ENCODE measurements at regions of chr15 and their contacts with region 1.

Region 1: DNA sequence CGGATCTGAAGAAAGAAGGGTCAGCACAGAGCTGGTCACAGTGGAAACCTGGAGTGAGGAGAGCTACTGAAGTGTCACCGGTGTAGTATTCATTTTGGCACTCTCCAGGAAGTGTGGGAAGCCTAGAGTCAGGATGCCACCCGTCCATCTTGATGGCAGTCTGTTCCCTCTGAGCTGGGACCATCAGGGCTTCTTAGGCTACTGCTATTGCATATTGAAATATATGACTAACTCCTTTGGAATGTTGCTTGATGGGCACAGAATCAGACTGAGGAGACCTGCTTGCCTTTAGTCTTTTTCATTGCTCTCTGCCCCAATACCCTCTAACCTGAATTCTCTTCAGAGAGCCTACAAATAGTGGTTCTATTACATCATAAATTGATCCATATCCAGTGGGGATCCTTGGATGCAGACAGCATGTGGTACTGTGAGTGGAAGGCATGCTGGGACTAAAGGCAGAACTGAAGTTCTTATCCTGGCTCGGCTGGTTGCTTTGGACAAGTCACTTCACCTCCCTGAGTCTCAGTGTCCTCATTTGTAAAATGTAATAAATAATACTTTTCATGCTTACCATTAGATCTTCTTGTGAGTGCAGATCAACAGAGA is 143.5 kb downstream of the PDE8A start:
- DNase-seq: peak; percentile 57
- ATAC-seq: peak; percentile 81
- H3K4me3 ChIP-seq: no peak overlapping the region
- H3K27ac ChIP-seq: no peak overlapping the region
- H3K4me1 ChIP-seq: peaks cover 6% of the 10 kb centered on the region
- H3K27me3 ChIP-seq: no peaks in the 10 kb centered on the region
- CTCF ChIP-seq: no peak
- POLR2A ChIP-seq: no peak
- RAD21 ChIP-seq: no peak

Region 2: GRCh38 chr15:84961114-84961452 is 164.1 kb before region 1 on chr15:
- CTCF ChIA-PET with region 1: no interaction called
- POLR2A ChIA-PET with region 1: no interaction called
- dilution Hi-C with region 1: no loop called
- in situ Hi-C with region 1: no loop called
- intact Hi-C with region 1: no loop called
- DNase-seq: peak; percentile 91
- ATAC-seq: peak; percentile 92
- H3K4me3 ChIP-seq: no peak overlapping the region
- H3K27ac ChIP-seq: 0 out of 2 replicates have a peak overlapping the region, but pooled peaks have one; percentile 4
- H3K4me1 ChIP-seq: peaks cover 6% of the 10 kb centered on the region
- H3K27me3 ChIP-seq: no peaks in the 10 kb centered on the region
- CTCF ChIP-seq: no peak
- POLR2A ChIP-seq: no peak
- RAD21 ChIP-seq: peak; percentile 22; the same call in 1 of the 2 replicates

Region 3: GRCh38 chr15:85089929-85090597 is 35.1 kb before region 1 on chr15:
- CTCF ChIA-PET with region 1: interaction called, 5 read pairs
- POLR2A ChIA-PET with region 1: no interaction called
- dilution Hi-C with region 1: no loop called
- in situ Hi-C with region 1: no loop called
- intact Hi-C with region 1: loop called (anchors 5 kb)
- DNase-seq: no peak
- ATAC-seq: no peak
- H3K4me3 ChIP-seq: no peak overlapping the region
- H3K27ac ChIP-seq: no peak overlapping the region
- H3K4me1 ChIP-seq: peaks cover 4% of the 10 kb centered on the region
- H3K27me3 ChIP-seq: no peaks in the 10 kb centered on the region
- CTCF ChIP-seq: no peak
- POLR2A ChIP-seq: no peak
- RAD21 ChIP-seq: no peak

Region 4: DNA sequence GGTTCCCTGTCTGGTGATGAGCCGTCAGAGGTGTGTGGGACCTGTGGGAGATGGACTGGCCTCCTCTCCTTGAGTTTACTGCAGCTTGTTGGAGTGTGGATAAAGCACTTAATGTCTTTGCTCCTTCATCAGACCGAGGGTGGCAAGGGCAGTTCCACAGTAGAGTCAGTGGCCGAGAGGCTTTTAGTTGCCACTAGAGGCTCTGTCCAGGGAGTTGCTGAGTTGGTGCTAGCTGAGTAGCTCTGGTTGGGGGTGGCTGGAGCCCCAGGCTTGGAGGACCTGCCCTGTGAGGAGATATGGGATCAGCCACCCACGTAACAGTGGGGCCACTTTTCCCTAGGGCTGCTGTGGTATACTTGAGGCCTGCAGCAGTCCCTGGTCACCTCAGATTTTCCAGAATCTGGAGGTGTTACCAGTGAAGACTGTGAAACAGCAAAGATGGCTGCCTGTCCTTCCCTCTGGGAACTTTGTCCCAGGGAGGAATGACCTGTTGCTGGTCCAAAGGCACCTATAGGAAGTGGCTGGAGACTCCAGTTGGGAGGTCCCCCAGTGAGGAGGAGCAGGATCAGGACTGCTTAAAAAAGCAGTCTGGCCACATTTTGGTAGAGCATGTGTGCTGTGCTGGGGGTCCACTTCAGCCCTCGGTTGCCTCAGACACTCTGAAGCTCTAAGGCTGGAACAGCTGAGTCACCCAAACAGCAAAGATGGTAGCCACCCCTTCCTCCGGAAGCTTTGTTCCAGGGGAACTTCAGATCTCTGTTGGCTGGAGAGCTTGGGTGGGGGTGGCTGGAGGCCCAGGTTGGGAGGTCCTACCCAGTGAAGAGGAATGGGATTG is 328.1 kb after region 1 on chr15:
- CTCF ChIA-PET with region 1: no interaction called
- POLR2A ChIA-PET with region 1: no interaction called
- dilution Hi-C with region 1: no loop called
- in situ Hi-C with region 1: no loop called
- intact Hi-C with region 1: no loop called
- DNase-seq: no peak
- ATAC-seq: no peak
- H3K4me3 ChIP-seq: no peak overlapping the region
- H3K27ac ChIP-seq: no peak overlapping the region
- H3K4me1 ChIP-seq: no peaks in the 10 kb centered on the region; the same call in 1 of the 2 replicates
- H3K27me3 ChIP-seq: no peaks in the 10 kb centered on the region
- CTCF ChIP-seq: no peak
- POLR2A ChIP-seq: no peak
- RAD21 ChIP-seq: no peak

Measured in IMR-90 (cell line).